Left ventricle myocardium superior (tissue), 1 donor: ENCODE measurements at regions of chr13 and their contacts with region 1.

Region 1: DNA sequence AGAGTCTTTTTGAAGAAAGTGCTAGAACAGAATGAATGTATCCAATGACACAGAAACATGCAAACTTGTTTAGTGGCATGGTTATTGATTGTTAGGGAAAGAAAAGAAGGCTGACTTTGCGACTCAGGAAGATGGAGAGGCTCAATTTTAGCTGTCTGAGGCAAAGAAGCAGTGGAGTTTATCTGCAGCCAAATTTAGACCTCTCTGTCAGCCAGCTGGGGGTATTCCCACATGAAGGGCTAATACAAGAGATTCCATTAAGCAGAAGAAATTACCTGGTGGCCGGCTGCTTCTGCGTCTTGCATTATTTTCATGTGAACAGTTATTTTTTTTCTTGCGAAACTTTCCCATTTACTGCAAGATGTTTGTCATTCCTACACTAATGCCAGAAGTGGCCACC is 240.2 kb upstream of the NBEA start:
- DNase-seq: no peak
- ATAC-seq: peak; percentile 65

Region 2: GRCh38 chr13:33590936-33591335 is 1111.0 kb before region 1 on chr13:
- intact Hi-C with region 1: loop called (anchors 5 kb)
- DNase-seq: no peak
- ATAC-seq: no peak